K562 (cell line): ENCODE measurements at regions of chr5 and their contacts with region 1.

Region 1: DNA sequence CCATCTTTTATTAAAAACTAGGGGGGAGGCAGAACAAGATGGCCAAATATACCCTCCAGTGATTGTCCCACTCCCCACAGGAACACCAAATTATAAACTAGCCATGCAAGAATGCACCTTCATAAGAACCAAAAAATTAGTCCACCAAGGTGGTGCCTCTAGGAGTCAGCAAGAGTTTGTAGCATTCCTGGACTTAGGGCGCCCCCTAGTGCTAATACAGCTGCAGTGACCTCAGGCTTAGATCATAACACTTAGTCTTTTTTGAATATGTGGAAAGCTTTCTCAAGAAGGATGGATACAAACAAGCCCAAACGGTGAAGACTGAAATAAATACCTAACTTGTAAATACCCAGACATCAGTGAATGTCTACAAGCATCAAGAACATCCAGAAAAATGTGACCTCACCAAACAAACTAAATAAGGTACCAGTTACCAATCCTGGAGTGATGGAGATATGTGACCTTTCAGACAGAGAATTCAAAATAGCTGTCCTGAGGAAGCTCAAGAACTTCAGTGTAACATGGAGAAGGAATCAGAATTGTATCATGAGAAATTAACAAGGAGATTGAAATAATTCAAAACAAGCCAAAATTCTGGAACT is 19.3 kb downstream of the PPIP5K2 start:
- DNase-seq: peak; percentile 67 to 84 (median 71)
- ATAC-seq: peak; percentile 99
- H3K4me3 ChIP-seq: no peak overlapping the region
- H3K27ac ChIP-seq: no peak overlapping the region
- H3K4me1 ChIP-seq: no peaks in the 10 kb centered on the region
- H3K27me3 ChIP-seq: no peaks in the 10 kb centered on the region
- CTCF ChIP-seq: peak; percentile 81 to 92 (median 88)
- EP300 ChIP-seq: no peak
- POLR2A ChIP-seq: no peak
- RAD21 ChIP-seq: peak; percentile 80 to 90

Region 2: DNA sequence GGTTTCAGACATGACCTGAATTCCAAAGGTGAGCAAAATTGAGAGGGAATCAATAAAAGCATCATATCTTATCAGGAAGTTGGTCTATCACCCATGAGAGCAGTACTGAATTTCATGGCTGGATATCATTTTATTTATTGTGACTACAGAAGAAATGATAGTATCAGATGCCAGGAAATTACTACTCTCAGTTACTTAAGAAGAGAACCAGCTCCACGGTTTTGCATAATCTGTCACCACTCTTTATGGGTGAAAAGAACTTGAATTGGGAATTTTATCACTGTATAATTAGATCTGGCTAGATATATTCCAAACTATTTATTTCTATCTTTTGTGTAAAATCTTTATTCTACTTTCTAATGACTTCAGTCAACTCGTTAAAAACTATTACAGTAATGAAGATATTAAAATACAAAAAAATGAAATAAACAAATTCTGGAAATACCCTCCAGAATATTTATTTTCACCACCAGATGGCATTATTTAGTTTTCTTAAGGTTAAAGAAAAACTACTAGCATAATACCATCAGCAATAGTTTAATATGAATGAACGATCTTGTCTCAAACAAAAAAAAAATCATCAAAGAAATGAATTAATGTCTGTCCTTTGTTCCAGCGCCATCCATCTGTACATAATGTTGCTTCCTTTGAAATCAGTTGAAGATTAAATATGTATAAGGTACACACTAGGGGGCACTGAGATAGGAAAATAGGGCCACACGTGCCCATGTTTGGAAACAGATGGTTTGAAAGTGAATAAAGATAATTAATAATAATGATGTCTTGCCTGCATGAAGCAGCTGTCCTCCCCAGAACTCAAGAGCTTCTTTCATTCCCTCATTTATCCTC is 555.9 kb before region 1 on chr5:
- CTCF ChIA-PET with region 1: interaction called, 5 read pairs
- POLR2A ChIA-PET with region 1: no interaction called
- in situ Hi-C with region 1: no loop called
- intact Hi-C with region 1: loop called (anchors 2 kb)
- DNase-seq: peak in 3 of 4 experiments; percentile 2 to 9 (median 7)
- ATAC-seq: no peak
- H3K4me3 ChIP-seq: no peak overlapping the region
- H3K27ac ChIP-seq: no peak overlapping the region
- H3K4me1 ChIP-seq: no peaks in the 10 kb centered on the region
- H3K27me3 ChIP-seq: no peaks in the 10 kb centered on the region
- CTCF ChIP-seq: peak; percentile 21 to 48 (median 48); a peak in 3 of 6 replicates
- EP300 ChIP-seq: no peak
- POLR2A ChIP-seq: no peak
- RAD21 ChIP-seq: peak; percentile 48 to 61

Region 3: GRCh38 chr5:102778478-102778877 is 360.9 kb before region 1 on chr5:
- CTCF ChIA-PET with region 1: interaction called, 10 read pairs
- POLR2A ChIA-PET with region 1: interaction called, 3 read pairs
- in situ Hi-C with region 1: loop called (anchors 10 kb)
- intact Hi-C with region 1: loop called (anchors 1 kb)
- DNase-seq: no peak
- ATAC-seq: no peak
- H3K4me3 ChIP-seq: no peak overlapping the region
- H3K27ac ChIP-seq: no peak overlapping the region
- H3K4me1 ChIP-seq: no peaks in the 10 kb centered on the region
- H3K27me3 ChIP-seq: no peaks in the 10 kb centered on the region
- CTCF ChIP-seq: no peak
- EP300 ChIP-seq: no peak
- POLR2A ChIP-seq: no peak
- RAD21 ChIP-seq: no peak

Region 4: DNA sequence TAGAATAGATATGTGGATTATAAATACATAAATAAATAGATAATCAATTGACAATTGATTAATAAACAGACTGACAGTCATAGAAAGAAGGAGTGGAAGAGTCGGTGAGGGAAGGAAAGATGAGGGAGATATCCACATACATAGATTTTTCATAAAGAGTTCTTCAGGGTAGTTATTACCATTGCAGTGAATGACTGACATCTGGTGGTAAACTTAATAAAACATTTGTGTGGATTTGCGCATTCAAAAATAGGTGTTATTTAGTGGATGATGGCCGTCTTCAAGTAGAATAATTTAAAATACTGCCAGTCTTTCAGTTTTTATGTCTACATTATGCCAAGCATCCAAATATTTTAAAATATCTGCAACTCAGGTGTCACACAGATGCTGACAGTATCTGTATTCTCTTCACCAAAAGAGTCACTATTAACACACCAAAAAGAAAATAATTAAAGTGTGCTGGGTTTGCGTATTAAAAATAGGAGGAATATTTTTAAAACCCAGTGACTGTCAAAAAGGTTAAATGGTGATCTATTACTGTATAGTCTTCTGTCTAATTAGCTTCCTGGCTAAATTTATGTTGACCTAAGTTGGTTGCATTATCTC is 98.2 kb before region 1 on chr5:
- CTCF ChIA-PET with region 1: no interaction called
- POLR2A ChIA-PET with region 1: no interaction called
- in situ Hi-C with region 1: no loop called
- intact Hi-C with region 1: loop called (anchors 5 kb)
- DNase-seq: peak in 1 of 4 experiments; percentile 25
- ATAC-seq: no peak
- H3K4me3 ChIP-seq: no peak overlapping the region
- H3K27ac ChIP-seq: no peak overlapping the region
- H3K4me1 ChIP-seq: no peaks in the 10 kb centered on the region
- H3K27me3 ChIP-seq: no peaks in the 10 kb centered on the region
- CTCF ChIP-seq: peak in 2 of 3 experiments; percentile 2 to 43; a peak in 3 of 6 replicates
- EP300 ChIP-seq: no peak
- POLR2A ChIP-seq: no peak
- RAD21 ChIP-seq: peak; percentile 73 to 84